B cell (primary cell): ENCODE measurements at regions of chr7 and their contacts with region 1.

Region 1: DNA sequence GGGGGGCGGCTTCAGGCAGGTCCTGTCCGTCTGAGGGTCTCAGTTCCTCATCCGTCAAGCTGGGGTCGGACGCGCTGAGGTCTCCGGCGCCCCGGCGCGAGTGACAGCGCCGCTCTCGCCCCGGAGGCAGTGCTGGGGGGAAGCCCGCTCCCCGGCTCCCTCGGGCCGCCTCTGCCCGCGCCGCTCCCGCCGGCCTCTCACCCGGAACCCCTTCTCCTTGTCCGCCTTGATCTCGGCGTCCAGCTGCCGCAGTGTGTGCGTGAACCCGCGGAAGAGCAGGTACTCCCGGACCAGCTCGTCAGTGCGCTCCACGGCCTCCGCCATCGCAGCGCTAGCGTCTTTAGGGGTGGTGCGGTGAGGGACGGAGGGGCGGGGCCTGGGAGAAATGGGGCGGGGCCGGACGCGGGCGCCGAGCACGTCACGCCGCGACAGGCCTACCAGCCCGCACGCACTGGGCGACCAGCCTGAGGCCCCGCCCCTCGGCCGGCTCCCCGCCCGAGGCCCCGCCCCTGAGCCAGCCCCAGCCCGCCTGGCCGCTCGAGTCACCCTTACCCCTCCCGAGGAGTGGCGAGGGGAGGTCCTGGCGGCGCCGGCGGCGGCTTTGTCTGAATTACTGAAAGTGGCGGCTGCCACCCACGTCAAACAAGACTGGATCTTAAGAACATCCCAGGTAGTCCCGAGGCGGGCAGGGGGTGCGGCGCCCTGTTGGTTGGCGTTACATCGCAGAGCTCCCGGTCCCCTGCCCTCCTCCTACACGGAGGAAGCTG is at the start of gene WDR91:
- DNase-seq: peak; percentile 95
- ATAC-seq: peak; percentile 94
- H3K4me3 ChIP-seq: peak within 1 kb of the TSS; percentile 82 to 98 (median 88)
- H3K4me3 Mint-ChIP-seq: peak within 1 kb of the TSS; percentile 98
- H3K27ac ChIP-seq: peak within 1 kb of the TSS; percentile 77 to 92
- H3K27ac Mint-ChIP-seq: peak within 1 kb of the TSS; percentile 97
- H3K4me1 ChIP-seq: peaks cover 34 to 35% of the 10 kb centered on the region in 2 donors
- H3K4me1 Mint-ChIP-seq: peaks cover 48% of the 10 kb centered on the region
- H3K27me3 ChIP-seq: no peaks in the 10 kb centered on the region
- H3K27me3 Mint-ChIP-seq: no peaks in the 10 kb centered on the region
- CTCF ChIP-seq: no peak
- total RNA-seq, gene WDR91: 40.7 and 47.0 TPM in 2 replicates

Region 2: DNA sequence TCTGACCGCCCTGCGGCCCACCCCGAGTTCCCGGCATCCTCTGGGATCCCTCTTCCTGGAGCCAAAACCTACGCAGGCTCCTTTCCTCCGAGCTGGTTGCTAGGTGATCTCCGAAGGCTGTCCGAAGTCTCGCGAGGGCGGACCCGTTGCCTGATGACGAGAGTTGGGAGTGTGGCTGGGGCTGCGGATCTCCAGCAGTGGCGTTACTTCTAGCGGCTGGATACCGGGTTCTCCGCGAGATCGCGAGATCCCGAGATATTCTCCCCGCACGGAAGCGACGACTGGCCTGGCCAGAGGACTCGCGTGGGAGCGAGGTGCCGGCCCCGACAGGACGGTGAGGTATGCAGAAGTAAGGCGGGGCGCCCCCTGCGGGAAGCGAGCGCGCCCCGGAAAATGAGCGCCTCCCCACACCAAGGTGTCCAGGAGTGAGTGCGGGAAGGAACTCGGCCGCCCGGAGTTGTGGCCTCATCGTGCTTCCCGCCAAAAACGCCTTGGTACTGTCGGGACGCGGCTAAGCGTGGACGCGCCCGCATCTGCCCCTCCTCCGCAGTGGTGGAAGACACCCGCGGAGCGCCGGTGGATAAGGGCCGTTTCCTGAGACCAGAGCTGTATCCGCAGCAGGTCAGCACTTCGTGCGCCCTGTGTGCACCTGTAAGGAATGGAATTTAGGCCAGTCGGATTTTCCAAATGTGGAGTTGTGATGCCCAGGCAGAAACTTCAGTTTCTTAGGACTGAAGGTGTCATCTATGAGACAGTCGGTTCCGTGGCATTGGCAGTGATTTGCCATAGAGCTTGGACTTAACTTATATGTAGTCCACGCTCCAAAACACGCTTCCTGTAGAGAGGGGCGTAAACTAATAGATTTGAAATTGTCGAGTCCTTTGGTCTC is 224.8 kb before region 1 on chr7 and contains the start of gene AGBL3:
- CTCF ChIA-PET with region 1: interaction called, 15 read pairs
- POLR2A ChIA-PET with region 1: no interaction called
- intact Hi-C with region 1: loop called (anchors 1 kb)
- DNase-seq: peak; percentile 95
- ATAC-seq: peak; percentile 86
- H3K4me3 ChIP-seq: peak within 1 kb of the TSS; percentile 69 to 97 (median 94)
- H3K4me3 Mint-ChIP-seq: peak within 1 kb of the TSS; percentile 98
- H3K27ac ChIP-seq: peak within 1 kb of the TSS; percentile 88 to 93
- H3K27ac Mint-ChIP-seq: peak within 1 kb of the TSS; percentile 98
- H3K4me1 ChIP-seq: peaks cover 4 to 5% of the 10 kb centered on the region in 2 donors
- H3K4me1 Mint-ChIP-seq: peaks cover 34% of the 10 kb centered on the region
- H3K27me3 ChIP-seq: no peaks in the 10 kb centered on the region
- H3K27me3 Mint-ChIP-seq: no peaks in the 10 kb centered on the region
- CTCF ChIP-seq: peak; percentile 92
- total RNA-seq, gene AGBL3: 10.9 and 11.1 TPM in 2 replicates

Region 3: DNA sequence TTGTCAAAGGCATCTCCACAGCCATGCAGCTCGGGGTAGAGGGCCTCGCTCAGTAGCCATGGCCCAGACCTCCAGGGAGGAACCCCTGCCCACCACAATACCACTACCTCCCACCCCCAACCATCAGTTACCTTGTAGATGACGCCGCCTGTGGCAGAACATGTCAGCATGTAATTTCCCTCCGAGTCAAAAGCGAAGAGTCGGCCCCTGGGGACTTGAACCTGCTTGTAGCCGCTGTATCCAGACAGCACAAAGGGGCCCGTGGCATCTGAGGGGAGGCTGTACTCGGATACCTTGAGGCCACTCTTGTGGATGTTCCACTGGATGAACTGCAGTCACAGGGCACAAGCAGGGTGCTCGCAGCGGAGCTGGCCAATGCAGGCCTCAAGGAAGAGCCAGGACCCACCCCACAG is 24.5 kb before region 1 on chr7:
- CTCF ChIA-PET with region 1: interaction called, 4 read pairs
- POLR2A ChIA-PET with region 1: interaction called, 3 read pairs
- intact Hi-C with region 1: loop called (anchors 2 kb)
- DNase-seq: peak; percentile 49
- ATAC-seq: peak; percentile 56
- H3K4me3 ChIP-seq: no peak overlapping the region
- H3K4me3 Mint-ChIP-seq: peak overlapping the region; percentile 65
- H3K27ac ChIP-seq: no peak overlapping the region
- H3K27ac Mint-ChIP-seq: peak overlapping the region; percentile 60
- H3K4me1 ChIP-seq: peaks cover 9 to 16% of the 10 kb centered on the region in 2 donors
- H3K4me1 Mint-ChIP-seq: peaks cover 22% of the 10 kb centered on the region
- H3K27me3 ChIP-seq: no peaks in the 10 kb centered on the region
- H3K27me3 Mint-ChIP-seq: no peaks in the 10 kb centered on the region
- CTCF ChIP-seq: no peak

Region 4: DNA sequence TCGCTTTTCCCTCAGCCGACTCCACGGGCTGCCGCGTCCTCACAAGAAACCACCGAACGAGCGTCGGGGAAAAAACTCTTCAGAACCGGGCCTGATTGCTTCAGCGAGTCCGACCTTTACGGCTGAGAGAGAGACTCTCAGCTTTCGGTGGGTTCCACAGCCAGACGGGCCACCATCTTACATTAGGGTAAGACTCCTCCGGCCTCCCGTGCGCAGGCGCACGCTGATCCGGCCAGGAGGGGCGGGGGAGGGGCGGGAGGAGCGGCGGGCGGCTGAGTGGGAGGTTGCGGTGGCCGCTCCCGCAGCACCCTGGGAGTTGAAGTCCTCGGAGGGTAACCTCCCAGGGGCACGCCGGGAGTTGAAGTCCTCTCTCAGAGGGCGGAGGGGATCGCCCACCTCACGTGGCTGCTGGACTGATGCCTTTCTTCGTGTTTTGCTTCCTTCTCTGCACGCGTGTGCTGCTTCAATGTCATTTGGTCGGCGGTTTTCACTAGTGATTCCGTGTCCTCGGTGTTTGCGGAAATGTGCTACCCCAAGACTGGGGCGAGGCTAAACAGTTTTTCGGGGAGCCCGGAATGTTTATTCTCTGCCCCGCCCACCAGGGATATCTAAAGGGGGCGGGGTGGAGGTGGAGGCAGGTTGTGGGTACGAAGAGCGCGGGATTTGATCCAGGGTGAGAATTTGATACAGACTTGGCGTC is 298.7 kb after region 1 on chr7 and contains the start of gene CNOT4:
- CTCF ChIA-PET with region 1: no interaction called
- POLR2A ChIA-PET with region 1: no interaction called
- intact Hi-C with region 1: loop called (anchors 1 kb)
- DNase-seq: peak; percentile 97
- ATAC-seq: peak; percentile 95
- H3K4me3 ChIP-seq: peak within 1 kb of the TSS; percentile 79 to 96 (median 89)
- H3K4me3 Mint-ChIP-seq: no peak within 1 kb of the TSS
- H3K27ac ChIP-seq: peak within 1 kb of the TSS; percentile 92 to 96
- H3K27ac Mint-ChIP-seq: no peak within 1 kb of the TSS
- H3K4me1 ChIP-seq: peaks cover 17 to 24% of the 10 kb centered on the region in 2 donors
- H3K4me1 Mint-ChIP-seq: peaks cover 10% of the 10 kb centered on the region
- H3K27me3 ChIP-seq: no peaks in the 10 kb centered on the region
- H3K27me3 Mint-ChIP-seq: no peaks in the 10 kb centered on the region
- CTCF ChIP-seq: no peak
- total RNA-seq, gene CNOT4: 52.1 and 55.1 TPM in 2 replicates